ENCODE measurements at regions of chr1 and their contacts with region 1.

Region 1: DNA sequence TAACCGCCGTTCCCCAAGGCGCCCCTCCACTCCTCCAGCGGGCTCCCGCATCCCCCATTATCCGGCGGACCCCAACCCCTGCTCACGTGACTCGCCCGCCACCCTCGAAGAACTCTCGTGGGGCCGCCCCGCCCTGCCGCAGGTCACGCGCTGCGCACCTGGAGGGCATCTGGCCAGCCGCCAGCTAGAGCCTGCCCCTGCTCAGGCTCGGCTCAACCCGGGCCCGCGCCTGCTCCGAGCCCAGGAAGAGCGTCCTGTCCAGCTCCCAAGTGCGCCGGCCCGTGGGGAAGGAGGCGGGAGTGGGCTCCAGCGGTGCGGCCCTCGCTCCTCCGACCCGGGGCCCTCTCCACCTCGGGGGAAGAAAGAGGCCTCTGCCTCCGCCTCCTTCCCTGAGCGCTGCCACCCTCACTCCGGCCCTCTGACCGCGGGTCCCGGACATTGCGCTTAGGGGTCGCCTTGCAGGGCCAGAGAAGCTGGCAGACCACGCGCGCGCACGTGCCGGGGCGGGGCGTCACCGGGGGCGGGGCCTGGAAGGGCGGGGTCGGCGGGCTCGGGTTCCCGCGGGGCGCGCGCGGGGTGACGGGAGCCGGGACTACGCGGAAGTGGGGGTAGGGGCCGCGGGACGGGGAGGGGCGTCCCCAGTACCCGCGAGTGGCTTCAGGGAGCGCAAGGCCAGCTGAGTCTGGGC is 28.4 kb downstream of the HMGN2 start:
- DNase-seq: peak; percentile 93
- H3K4me3 Mint-ChIP-seq: peak overlapping the region; percentile 88
- H3K27ac Mint-ChIP-seq: peak overlapping the region; percentile 93
- H3K4me1 Mint-ChIP-seq: peaks cover 8% of the 10 kb centered on the region
- H3K27me3 Mint-ChIP-seq: no peaks in the 10 kb centered on the region

Region 2: DNA sequence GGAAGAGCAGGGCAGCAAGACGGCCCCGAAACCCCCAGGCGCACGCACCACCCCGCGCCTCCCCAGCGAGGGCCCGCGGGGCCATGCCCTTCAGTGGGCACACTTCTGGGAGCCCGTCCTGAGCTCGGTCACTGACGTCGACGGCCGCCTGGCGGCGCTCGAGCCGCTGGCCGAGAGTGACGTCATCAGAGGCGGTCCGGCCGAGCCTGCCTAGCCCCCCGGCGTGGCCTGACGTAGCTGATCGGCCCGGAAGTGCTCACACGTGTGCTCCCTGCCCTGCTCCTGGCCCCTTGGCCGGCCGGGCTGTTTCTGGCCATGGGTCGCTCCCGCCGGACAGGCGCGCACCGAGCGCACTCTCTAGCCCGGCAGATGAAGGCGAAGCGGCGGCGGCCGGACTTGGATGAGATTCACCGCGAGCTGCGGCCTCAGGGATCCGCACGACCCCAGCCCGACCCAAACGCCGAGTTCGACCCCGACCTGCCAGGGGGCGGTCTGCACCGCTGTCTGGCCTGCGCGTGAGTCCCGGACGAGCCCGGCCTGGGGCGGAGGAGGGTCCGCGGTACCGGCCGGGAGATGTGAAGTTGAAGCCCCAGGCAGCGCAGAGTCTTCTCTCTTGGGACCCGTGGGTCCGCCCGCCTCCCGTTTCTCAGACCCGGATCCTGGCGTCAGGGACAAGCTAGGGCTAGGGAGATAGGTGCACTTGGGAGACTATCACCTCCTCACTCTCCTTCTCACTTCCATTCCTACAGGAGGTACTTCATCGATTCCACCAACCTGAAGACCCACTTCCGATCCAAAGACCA is 330.8 kb before region 1 on chr1 and contains the start of gene ZNF593:
- CTCF ChIA-PET with region 1: no interaction called
- POLR2A ChIA-PET with region 1: no interaction called
- intact Hi-C with region 1: no loop called
- DNase-seq: peak; percentile 94
- H3K4me3 Mint-ChIP-seq: peak within 1 kb of the TSS; percentile 83
- H3K27ac Mint-ChIP-seq: peak within 1 kb of the TSS; percentile 72
- H3K4me1 Mint-ChIP-seq: peaks cover 17% of the 10 kb centered on the region
- H3K27me3 Mint-ChIP-seq: no peaks in the 10 kb centered on the region
- total RNA-seq, gene ZNF593: 37.4 to 38.0 TPM

Region 3: DNA sequence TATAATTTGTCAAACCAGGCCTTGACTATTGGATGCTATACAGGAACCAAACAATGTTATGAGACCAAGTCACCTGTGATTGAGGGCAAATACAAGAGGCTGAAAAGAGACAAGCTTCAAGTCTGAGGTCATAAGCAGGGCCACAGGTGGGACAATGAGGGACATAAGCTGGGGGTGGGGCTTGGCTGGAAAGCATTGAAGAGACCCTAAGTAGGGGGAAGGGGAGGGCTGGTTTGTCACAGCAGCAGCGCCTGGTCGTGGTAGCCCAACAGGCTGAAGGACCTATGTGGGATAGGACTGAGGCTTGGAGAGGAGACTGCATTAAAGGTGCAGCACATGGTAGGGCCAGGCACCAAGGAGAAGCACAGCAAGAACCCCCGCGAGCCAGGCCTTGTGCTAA is 10.5 kb before region 1 on chr1:
- CTCF ChIA-PET with region 1: interaction called, 13 read pairs
- POLR2A ChIA-PET with region 1: interaction called, 9 read pairs
- intact Hi-C with region 1: no loop called
- DNase-seq: no peak
- H3K4me3 Mint-ChIP-seq: no peak overlapping the region
- H3K27ac Mint-ChIP-seq: no peak overlapping the region
- H3K4me1 Mint-ChIP-seq: no peaks in the 10 kb centered on the region
- H3K27me3 Mint-ChIP-seq: no peaks in the 10 kb centered on the region

Region 4: DNA sequence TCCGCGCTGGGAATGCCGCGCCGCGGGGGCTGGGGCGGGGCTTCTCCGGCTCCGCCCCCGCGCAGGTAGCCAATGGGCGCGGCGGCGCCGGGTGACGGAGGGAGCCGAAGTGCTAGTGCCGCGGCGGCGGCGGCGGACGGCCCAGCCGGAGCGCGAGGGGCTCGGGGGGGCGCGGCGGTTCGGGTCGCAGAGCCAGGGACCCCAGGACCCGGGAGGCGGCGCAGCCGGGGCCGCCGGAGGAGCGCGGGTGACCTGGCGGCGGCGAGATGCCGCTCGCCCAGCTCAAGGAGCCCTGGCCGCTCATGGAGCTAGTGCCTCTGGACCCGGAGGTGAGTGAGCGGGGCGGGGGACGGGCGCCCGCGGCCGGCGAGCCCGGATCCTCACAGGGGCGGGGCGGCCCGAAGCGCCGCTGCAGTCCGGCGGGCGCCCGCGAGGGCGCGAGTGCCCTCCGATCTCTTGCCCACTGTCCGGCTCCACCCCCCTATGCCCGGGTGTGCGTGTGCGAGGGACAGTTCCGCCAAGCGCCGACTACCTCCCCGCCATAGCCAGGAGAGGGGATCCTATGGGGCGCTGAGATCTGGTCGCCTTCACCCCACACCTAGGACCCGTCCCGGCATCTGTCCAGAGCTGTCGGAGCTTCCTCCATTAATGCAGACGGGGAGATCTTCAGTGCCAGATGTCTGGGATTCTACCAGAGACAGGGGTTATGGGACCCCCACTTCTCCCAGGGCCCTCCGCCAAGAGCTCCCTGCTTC is 29.2 kb after region 1 on chr1 and contains the start of gene RPS6KA1:
- CTCF ChIA-PET with region 1: interaction called, 11 read pairs
- POLR2A ChIA-PET with region 1: interaction called, 5 read pairs
- intact Hi-C with region 1: loop called (anchors 1 kb)
- DNase-seq: peak; percentile 68
- H3K4me3 Mint-ChIP-seq: peak within 1 kb of the TSS; percentile 83
- H3K27ac Mint-ChIP-seq: peak within 1 kb of the TSS; percentile 15
- H3K4me1 Mint-ChIP-seq: peaks cover 29% of the 10 kb centered on the region
- H3K27me3 Mint-ChIP-seq: no peaks in the 10 kb centered on the region
- total RNA-seq, gene RPS6KA1: 109 to 112 TPM

Region 5: DNA sequence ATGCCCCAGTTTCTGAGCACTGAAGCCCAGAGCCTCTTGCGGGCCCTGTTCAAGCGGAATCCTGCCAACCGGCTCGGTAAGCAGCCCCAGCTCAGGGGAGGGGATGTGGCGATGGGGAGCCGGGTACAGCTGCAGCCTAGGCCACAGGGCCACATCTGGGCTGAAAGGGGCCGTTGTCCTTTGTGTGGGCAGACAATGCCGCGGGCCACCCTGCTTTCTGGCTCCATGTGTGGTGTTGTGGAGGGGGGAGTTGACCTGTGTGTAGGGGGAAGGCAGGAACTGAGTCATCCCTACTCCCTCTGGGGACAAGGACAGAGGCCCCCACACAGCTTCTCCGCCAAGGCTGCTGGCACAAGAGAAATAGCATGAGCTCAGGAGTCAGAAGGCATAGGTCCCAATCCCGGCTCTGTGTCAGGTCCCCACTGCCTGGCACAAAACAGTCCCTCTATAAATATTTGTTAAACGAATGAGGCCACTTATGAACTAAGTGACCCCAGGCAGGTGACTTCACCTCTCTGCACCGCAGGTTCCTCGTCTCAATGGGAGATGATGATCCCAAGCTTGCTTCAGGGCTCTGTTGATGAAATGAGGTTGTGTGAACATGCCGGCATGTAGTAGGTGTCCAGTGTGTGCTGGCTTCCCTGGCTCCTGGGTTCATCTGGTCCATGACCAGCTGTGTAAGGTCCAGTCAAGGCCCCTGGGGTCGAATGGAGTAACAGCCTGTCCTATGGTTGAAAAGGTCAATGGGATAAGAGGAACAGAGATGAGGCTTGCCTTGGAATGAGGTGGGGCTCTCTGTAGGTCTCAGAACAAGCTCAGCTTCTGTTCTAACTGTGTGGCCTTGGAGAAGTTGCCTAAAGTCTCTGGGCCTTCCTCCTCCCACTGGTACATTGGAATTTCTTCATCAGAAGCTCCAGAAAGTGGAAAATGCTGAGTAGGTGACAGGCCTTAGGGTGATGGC is 55.2 kb after region 1 on chr1:
- CTCF ChIA-PET with region 1: interaction called, 11 read pairs
- POLR2A ChIA-PET with region 1: no interaction called
- intact Hi-C with region 1: no loop called
- DNase-seq: no peak
- H3K4me3 Mint-ChIP-seq: no peak overlapping the region
- H3K27ac Mint-ChIP-seq: peak overlapping the region; percentile 62
- H3K4me1 Mint-ChIP-seq: peaks cover 18% of the 10 kb centered on the region
- H3K27me3 Mint-ChIP-seq: no peaks in the 10 kb centered on the region

Region 6: GRCh38 chr1:26602378-26602959 is 101.8 kb after region 1 on chr1:
- CTCF ChIA-PET with region 1: interaction called, 11 read pairs
- POLR2A ChIA-PET with region 1: no interaction called
- intact Hi-C with region 1: no loop called
- DNase-seq: no peak
- H3K4me3 Mint-ChIP-seq: no peak overlapping the region
- H3K27ac Mint-ChIP-seq: no peak overlapping the region
- H3K4me1 Mint-ChIP-seq: peaks cover 7% of the 10 kb centered on the region
- H3K27me3 Mint-ChIP-seq: no peaks in the 10 kb centered on the region

Region 7: DNA sequence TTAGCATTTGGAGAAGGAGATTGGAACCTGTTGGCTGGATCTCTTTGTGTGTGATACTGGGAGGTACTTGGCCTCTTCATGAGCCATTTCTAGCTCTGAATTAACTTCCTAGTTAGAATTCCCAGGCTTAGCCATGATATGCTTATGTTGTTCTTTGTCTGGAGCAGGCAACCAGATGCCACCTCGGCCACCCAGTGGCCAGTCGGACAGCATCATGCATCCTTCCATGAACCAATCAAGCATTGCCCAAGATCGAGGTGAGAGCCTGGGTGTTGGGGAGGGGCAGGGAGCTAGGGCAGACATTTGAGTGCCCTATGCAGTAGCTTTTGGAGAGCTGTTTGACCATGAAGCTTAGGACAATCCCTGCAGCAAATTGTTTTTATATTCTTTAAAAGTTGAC is 260.6 kb after region 1 on chr1:
- CTCF ChIA-PET with region 1: no interaction called
- POLR2A ChIA-PET with region 1: no interaction called
- intact Hi-C with region 1: no loop called
- DNase-seq: no peak
- H3K4me3 Mint-ChIP-seq: no peak overlapping the region
- H3K27ac Mint-ChIP-seq: no peak overlapping the region
- H3K4me1 Mint-ChIP-seq: peaks cover 7% of the 10 kb centered on the region
- H3K27me3 Mint-ChIP-seq: no peaks in the 10 kb centered on the region